ENCODE measurements at regions of chr10 and their contacts with region 1.

Region 1: GRCh38 chr10:122953827-122954730 is at the start of gene C10orf88:
- DNase-seq: peak; percentile 99
- H3K4me3 ChIP-seq: peak within 1 kb of the TSS; percentile 47 to 78 (median 74)
- H3K27ac ChIP-seq: peak within 1 kb of the TSS; percentile 36
- H3K4me1 ChIP-seq: peaks cover 14% of the 10 kb centered on the region
- H3K27me3 ChIP-seq: no peaks in the 10 kb centered on the region
- CTCF ChIP-seq: no peak
- POLR2A ChIP-seq: peak; percentile 66
- total RNA-seq, gene C10orf88: 10.6 and 13.2 TPM in 2 replicates

Region 2: GRCh38 chr10:122648599-122649428 is 305.3 kb before region 1 on chr10:
- CTCF ChIA-PET with region 1: interaction called, 3 read pairs
- POLR2A ChIA-PET with region 1: no interaction called
- dilution Hi-C with region 1: no loop called
- intact Hi-C with region 1: loop called (anchors 2 kb)
- DNase-seq: peak; percentile 50
- H3K4me3 ChIP-seq: no peak overlapping the region
- H3K27ac ChIP-seq: no peak overlapping the region
- H3K4me1 ChIP-seq: no peaks in the 10 kb centered on the region
- H3K27me3 ChIP-seq: peaks cover 3 to 9% of the 10 kb centered on the region in 2 experiments
- CTCF ChIP-seq: peak; percentile 72 to 75
- POLR2A ChIP-seq: no peak

Region 3: DNA sequence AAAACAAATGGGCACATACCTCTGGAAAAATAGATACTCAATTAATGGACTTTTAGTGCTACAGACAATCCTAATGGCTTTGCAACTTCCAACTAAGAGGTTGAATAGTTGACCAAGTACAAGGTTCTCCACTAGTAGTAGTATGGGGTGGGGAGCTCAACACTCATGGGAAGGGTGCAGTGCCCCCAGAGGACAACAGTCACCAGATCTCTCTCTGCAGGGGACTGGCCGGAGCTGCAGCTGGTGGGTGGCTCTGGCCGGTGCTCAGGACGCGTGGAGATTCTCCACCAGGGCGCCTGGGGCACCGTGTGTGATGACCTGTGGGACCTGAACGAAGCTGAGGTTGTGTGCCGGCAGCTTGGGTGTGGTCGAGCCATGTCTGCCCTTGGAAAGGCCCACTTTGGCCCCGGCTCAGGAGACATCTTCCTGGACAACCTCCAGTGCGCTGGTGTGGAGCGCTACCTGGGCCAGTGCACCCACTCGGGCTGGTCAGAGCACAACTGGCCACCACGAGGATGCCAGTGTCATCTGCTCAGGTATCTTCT is 176.5 kb before region 1 on chr10:
- CTCF ChIA-PET with region 1: no interaction called
- POLR2A ChIA-PET with region 1: no interaction called
- dilution Hi-C with region 1: no loop called
- intact Hi-C with region 1: loop called (anchors 2 kb)
- DNase-seq: no peak
- H3K4me3 ChIP-seq: no peak overlapping the region
- H3K27ac ChIP-seq: no peak overlapping the region
- H3K4me1 ChIP-seq: no peaks in the 10 kb centered on the region
- H3K27me3 ChIP-seq: no peaks in the 10 kb centered on the region
- CTCF ChIP-seq: no peak
- POLR2A ChIP-seq: no peak

Region 4: GRCh38 chr10:122854648-122855047 is 99.4 kb before region 1 on chr10:
- CTCF ChIA-PET with region 1: interaction called, 3 read pairs
- POLR2A ChIA-PET with region 1: no interaction called
- dilution Hi-C with region 1: no loop called
- intact Hi-C with region 1: loop called (anchors 2 kb)
- DNase-seq: peak; percentile 54
- H3K4me3 ChIP-seq: no peak overlapping the region
- H3K27ac ChIP-seq: peak overlapping the region; percentile 73
- H3K4me1 ChIP-seq: peaks cover 61% of the 10 kb centered on the region
- H3K27me3 ChIP-seq: no peaks in the 10 kb centered on the region
- CTCF ChIP-seq: no peak
- POLR2A ChIP-seq: no peak

Region 5: DNA sequence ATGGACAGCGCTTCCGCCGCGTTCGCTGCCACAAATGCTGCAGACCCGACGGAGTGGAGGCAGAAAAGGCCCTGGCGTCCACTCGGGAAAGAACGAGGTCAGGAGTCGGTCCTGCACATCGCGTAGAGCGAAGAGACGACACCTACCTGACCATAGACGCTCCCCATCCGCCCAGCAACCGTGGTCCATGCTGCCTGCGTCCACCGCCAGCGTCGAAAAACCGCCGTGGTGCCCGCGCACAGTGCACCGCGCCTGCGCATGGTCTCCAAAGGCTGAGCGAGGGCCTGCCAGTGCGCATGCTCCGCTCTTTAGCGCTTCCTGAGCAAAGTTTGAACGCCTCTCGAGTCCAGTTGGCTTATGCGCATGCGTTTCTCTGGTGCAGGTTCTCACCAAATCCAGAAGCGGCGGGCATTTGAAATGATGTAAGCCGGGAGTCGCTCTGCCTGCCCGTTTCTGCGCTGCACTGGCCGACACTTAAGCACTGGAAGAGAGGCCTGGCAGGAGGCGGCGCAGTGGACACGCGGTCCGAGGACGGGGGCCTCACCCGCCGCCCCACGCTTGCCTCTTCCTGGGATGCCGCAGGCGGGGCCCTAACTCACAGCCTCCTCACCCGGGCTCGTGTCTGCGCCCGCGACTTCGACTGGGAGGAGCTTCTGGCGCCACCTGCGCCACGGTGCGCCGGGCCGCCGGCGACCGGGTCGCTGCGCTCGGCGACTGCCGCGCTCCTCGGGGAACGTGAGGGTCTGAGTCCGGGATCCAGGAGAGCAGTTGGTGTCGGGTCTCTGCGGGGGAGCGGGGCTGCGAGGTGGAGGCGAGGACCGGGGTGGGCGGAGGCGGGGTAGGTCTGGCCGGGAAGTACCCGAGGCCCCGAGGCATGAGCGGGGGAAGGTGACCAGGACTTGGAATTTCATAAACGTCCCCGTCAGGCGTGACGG is 74.5 kb before region 1 on chr10 and contains the start of gene FAM24B:
- CTCF ChIA-PET with region 1: no interaction called
- POLR2A ChIA-PET with region 1: no interaction called
- dilution Hi-C with region 1: no loop called
- intact Hi-C with region 1: loop called (anchors 1 kb)
- DNase-seq: peak; percentile 99
- H3K4me3 ChIP-seq: peak within 1 kb of the TSS; percentile 39 to 56 (median 55)
- H3K27ac ChIP-seq: peak within 1 kb of the TSS; percentile 43
- H3K4me1 ChIP-seq: peaks cover 26% of the 10 kb centered on the region
- H3K27me3 ChIP-seq: no peaks in the 10 kb centered on the region
- CTCF ChIP-seq: no peak
- POLR2A ChIP-seq: peak; percentile 42
- total RNA-seq, gene FAM24B: 8.5 and 10.6 TPM in 2 replicates

Region 6: DNA sequence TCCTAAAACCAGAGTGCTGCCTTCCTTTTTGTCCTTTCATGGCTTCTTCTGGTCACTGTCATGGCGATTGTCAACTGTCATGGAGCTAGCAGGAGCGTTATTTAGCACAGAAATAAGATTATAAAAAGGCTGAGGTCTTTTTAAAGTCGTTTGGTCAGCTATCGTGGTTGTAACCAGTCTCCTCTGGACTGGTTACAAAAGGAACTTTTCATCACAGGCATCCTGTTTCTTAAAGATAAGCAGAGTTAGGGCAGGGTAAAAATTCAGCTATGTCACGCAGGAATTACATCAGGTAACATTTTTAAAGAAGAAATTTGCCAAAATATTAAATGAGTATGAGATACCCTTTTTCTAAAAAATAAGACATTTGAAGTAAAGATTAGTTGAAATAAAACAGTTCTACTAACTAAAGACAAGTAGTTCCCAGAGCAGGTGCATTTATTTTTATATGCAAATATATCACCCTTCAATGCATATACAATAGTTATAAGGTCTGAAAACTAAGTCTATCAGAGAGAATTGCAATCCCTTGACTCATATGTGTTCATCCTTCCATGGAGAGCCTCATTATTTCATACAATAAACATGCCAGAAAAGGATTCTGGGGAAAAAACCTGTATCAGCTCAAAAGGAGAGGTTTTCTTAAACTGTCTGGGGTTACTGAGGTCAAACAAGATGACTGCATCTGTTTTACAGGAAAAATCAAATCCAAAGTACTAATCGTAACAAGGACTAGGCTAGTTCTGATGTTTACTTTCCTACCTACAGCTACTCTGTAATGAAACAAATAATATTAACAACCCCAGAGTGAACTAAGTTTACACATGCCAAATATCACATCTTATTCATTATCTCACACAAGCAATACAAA is 22.8 kb before region 1 on chr10:
- CTCF ChIA-PET with region 1: no interaction called
- POLR2A ChIA-PET with region 1: no interaction called
- dilution Hi-C with region 1: no loop called
- intact Hi-C with region 1: no loop called
- DNase-seq: no peak
- H3K4me3 ChIP-seq: no peak overlapping the region
- H3K27ac ChIP-seq: no peak overlapping the region
- H3K4me1 ChIP-seq: no peaks in the 10 kb centered on the region
- H3K27me3 ChIP-seq: no peaks in the 10 kb centered on the region
- CTCF ChIP-seq: no peak
- POLR2A ChIP-seq: no peak

Region 7: GRCh38 chr10:122980209-122981065 is 26.4 kb after region 1 on chr10 and contains the start of gene PSTK:
- CTCF ChIA-PET with region 1: interaction called, 7 read pairs
- POLR2A ChIA-PET with region 1: no interaction called
- dilution Hi-C with region 1: no loop called
- intact Hi-C with region 1: loop called (anchors 1 kb)
- DNase-seq: peak; percentile 92
- H3K4me3 ChIP-seq: peak within 1 kb of the TSS; percentile 36 to 80 (median 55)
- H3K27ac ChIP-seq: peak within 1 kb of the TSS; percentile 82
- H3K4me1 ChIP-seq: peaks cover 8% of the 10 kb centered on the region
- H3K27me3 ChIP-seq: peaks cover 0 to 1% of the 10 kb centered on the region in 2 experiments
- CTCF ChIP-seq: peak; percentile 84 to 97
- POLR2A ChIP-seq: peak; percentile 56
- total RNA-seq, gene PSTK: 1.6 and 2.7 TPM in 2 replicates

Region 8: GRCh38 chr10:123413353-123413752 is 459.3 kb after region 1 on chr10:
- CTCF ChIA-PET with region 1: no interaction called
- POLR2A ChIA-PET with region 1: no interaction called
- dilution Hi-C with region 1: no loop called
- intact Hi-C with region 1: no loop called
- DNase-seq: no peak
- H3K4me3 ChIP-seq: no peak overlapping the region
- H3K27ac ChIP-seq: no peak overlapping the region
- H3K4me1 ChIP-seq: no peaks in the 10 kb centered on the region
- H3K27me3 ChIP-seq: no peaks in the 10 kb centered on the region
- CTCF ChIP-seq: no peak
- POLR2A ChIP-seq: no peak